A549 (cell line): ENCODE measurements at regions of chr10 and their contacts with region 1.

Region 1: DNA sequence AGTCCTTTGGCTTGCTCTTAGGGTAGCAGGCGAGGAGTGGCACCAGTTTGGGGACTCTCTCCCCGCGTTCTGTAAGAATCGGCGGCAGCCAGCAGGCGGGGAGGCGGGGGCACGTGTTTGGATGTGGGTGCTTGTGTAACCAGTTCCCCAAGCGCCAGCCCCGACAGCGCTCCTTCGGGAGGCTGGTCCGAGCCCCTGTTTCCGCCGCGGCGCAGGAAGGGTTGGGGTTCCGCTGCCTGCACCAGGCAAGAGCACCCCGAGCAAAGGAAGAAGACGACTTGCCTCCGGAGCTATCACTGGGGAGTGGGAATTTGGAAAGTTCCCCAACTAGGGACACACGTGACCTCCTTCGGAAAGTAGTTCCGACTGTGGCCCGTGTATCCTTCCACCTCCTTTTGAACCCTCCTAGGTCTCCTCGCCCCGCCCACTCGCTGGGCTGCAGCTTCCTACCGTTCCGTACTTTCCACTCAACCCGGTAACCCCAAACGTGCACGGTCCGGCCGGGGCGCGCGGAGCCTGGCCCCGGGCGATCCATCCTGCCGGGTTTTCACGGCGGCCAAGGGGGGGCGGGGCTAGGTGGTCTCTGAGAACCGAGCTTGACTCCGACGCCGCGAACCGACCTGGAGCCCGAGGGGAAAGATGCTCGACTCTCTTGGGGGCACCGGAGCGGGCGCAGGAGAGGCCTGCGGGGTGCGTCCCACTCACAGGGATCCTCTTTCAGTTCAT is 1.2 kb downstream of the KLLN start:
- DNase-seq: peak; percentile 91 to 99
- ATAC-seq: peak; percentile 57 to 74
- H3K4me3 ChIP-seq: peak overlapping the region; percentile 78
- H3K27ac ChIP-seq: peak overlapping the region; percentile 96 to 99
- H3K4me1 ChIP-seq: peaks cover 5% of the 10 kb centered on the region; the same call in 1 of the 3 replicates
- CTCF ChIP-seq: no peak; the same call in 2 of the 3 replicates
- EP300 ChIP-seq: no peak
- POLR2A ChIP-seq: peak; percentile 65
- RAD21 ChIP-seq: peak in 1 of 2 experiments; percentile 26; a peak in 1 of 5 replicates

Region 2: GRCh38 chr10:87804939-87805569 is 57.1 kb before region 1 on chr10:
- CTCF ChIA-PET with region 1: no interaction called
- POLR2A ChIA-PET with region 1: no interaction called
- DNase-seq: no peak
- ATAC-seq: no peak
- H3K4me3 ChIP-seq: no peak overlapping the region
- H3K27ac ChIP-seq: no peak overlapping the region
- H3K4me1 ChIP-seq: no peaks in the 10 kb centered on the region
- CTCF ChIP-seq: no peak
- EP300 ChIP-seq: no peak
- POLR2A ChIP-seq: no peak
- RAD21 ChIP-seq: no peak

Region 3: GRCh38 chr10:87817609-87818504 is 44.3 kb before region 1 on chr10 and contains the start of gene ATAD1:
- CTCF ChIA-PET with region 1: interaction called, 5 read pairs
- POLR2A ChIA-PET with region 1: interaction called, 26 read pairs
- DNase-seq: peak; percentile 76 to 93
- ATAC-seq: peak; percentile 95 to 96
- H3K4me3 ChIP-seq: peak within 1 kb of the TSS; percentile 70
- H3K27ac ChIP-seq: peak within 1 kb of the TSS; percentile 85 to 95
- H3K4me1 ChIP-seq: peaks cover 35% of the 10 kb centered on the region
- CTCF ChIP-seq: no peak
- EP300 ChIP-seq: no peak
- POLR2A ChIP-seq: peak; percentile 63
- RAD21 ChIP-seq: peak in 1 of 2 experiments; percentile 12; a peak in 1 of 5 replicates
- polyA plus RNA-seq, gene ATAD1: 66.7 and 94.8 TPM in 2 replicates

Region 4: GRCh38 chr10:87850742-87851205 is 11.3 kb before region 1 on chr10:
- CTCF ChIA-PET with region 1: interaction called, 12 read pairs
- POLR2A ChIA-PET with region 1: interaction called, 34 read pairs
- DNase-seq: peak; percentile 63 to 83
- ATAC-seq: peak; percentile 89 to 92
- H3K4me3 ChIP-seq: no peak overlapping the region
- H3K27ac ChIP-seq: peak overlapping the region in 1 of 2 experiments; percentile 58; a peak in 3 of 6 replicates
- H3K4me1 ChIP-seq: peaks cover 29% of the 10 kb centered on the region
- CTCF ChIP-seq: peak; percentile 64
- EP300 ChIP-seq: no peak
- POLR2A ChIP-seq: no peak
- RAD21 ChIP-seq: peak; percentile 82 to 87

Region 5: GRCh38 chr10:88114368-88114767 is 252.3 kb after region 1 on chr10:
- CTCF ChIA-PET with region 1: interaction called, 24 read pairs
- POLR2A ChIA-PET with region 1: interaction called, 3 read pairs
- DNase-seq: peak; percentile 62 to 66
- ATAC-seq: peak; percentile 83 to 93
- H3K4me3 ChIP-seq: no peak overlapping the region
- H3K27ac ChIP-seq: no peak overlapping the region
- H3K4me1 ChIP-seq: peaks cover 22% of the 10 kb centered on the region
- CTCF ChIP-seq: peak; percentile 56
- EP300 ChIP-seq: no peak
- POLR2A ChIP-seq: no peak
- RAD21 ChIP-seq: peak; percentile 67 to 71

Region 6: DNA sequence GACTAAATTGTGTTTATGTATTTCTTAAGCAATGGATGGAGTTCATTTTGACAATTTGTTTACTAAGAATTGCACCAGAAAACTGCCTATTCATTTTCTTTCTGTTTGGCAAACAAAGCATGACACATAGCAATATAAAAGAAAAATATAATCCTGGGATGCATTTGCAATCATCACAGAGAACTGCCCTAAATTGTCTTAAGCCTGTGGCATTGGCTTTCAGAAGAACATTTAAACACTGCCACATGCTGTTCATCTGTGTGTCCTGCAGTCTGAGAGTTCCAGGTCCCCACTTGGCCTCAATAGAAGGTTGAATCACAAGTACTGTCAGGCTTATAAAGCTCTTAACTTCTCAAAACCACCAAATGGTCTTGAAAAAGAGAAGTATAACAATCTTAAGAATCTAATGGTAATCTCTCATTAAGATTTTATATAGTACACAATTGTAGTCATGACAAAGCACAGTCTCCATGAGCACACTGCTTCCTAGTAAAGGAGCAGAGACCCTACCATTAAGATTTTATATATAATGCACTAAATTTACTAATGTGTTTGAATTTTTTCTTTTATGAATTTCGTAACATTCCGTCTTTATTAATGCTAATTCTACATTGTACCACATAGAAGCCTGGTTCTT is 691.1 kb after region 1 on chr10:
- CTCF ChIA-PET with region 1: interaction called, 28 read pairs
- POLR2A ChIA-PET with region 1: interaction called, 3 read pairs
- DNase-seq: peak; percentile 26 to 75
- ATAC-seq: peak; percentile 94 to 97
- H3K4me3 ChIP-seq: no peak overlapping the region
- H3K27ac ChIP-seq: no peak overlapping the region
- H3K4me1 ChIP-seq: peaks cover 10% of the 10 kb centered on the region
- CTCF ChIP-seq: peak; percentile 89
- EP300 ChIP-seq: no peak
- POLR2A ChIP-seq: no peak
- RAD21 ChIP-seq: peak; percentile 89 to 90